A673 (cell line): ENCODE measurements at regions of chr10 and their contacts with region 1.

Region 1: GRCh38 chr10:113854011-113854760 is at the starts of genes DCLRE1A and NHLRC2:
- DNase-seq: peak; percentile 90
- H3K4me3 ChIP-seq: peak within 1 kb of the TSS; percentile 76
- H3K27ac ChIP-seq: peak within 1 kb of the TSS; percentile 99
- H3K4me1 ChIP-seq: peaks cover 27% of the 10 kb centered on the region
- H3K27me3 ChIP-seq: no peaks in the 10 kb centered on the region
- CTCF ChIP-seq: no peak
- total RNA-seq, gene DCLRE1A: 62.4 and 75.6 TPM in 2 replicates
- total RNA-seq, gene NHLRC2: 49.7 and 61.9 TPM in 2 replicates

Region 2: DNA sequence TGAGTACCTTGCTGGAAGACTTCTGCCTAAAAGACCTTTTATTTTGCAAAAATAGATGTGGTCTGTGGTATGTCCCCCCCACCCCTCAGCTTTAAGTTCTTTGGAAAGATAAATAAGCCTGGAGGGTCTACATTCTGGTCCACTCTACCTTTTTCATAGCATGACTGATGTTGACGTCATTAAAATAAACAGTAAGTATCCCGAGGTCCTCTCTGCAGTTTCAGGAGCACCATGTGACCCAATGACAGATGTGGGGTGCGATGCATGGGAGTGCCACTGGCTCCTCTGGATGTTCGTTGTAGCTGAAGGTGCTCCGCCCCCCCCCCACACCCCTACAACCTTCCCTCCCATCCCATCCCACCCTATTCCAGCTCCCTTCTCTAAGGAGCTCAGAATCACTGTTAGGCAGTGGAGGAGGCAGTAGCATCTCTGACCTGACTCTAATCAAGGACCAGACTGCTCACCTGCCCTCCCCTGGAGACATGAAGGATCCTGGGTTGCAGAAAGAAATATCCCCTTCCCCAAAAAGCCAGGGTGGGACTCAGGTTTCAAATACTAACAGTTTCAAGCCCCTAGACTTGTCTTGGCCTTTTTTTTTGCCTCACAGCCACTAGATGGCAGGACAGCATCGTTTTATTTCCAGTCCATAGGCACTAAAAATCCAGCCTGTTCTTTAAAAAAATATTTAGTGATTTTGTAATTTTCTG is 149.4 kb before region 1 on chr10:
- CTCF ChIA-PET with region 1: no interaction called
- POLR2A ChIA-PET with region 1: interaction called, 5 read pairs
- intact Hi-C with region 1: loop called (anchors 2 kb)
- DNase-seq: peak; percentile 80
- H3K4me3 ChIP-seq: no peak overlapping the region
- H3K27ac ChIP-seq: peak overlapping the region; percentile 72
- H3K4me1 ChIP-seq: peaks cover 53% of the 10 kb centered on the region
- H3K27me3 ChIP-seq: no peaks in the 10 kb centered on the region
- CTCF ChIP-seq: peak; percentile 83

Region 3: DNA sequence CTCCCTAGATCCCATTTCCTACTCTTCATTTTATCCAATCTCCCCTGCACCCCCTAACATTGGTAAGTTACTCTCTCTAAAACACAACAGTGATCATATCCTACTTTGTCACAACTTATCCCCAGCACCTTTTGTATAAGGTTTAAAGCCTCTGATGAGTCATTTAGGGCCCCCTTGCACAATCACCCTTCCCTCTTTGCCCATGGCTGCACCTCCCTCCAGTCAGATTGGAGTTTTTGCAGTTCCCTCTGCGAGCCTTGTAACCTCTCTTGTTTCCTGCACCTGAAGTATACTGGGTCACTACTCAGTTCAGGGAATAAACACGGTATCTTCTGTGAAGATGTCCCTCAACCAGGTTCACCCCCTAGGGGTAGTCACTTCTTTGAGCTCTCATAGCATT is 133.6 kb after region 1 on chr10:
- CTCF ChIA-PET with region 1: no interaction called
- POLR2A ChIA-PET with region 1: no interaction called
- intact Hi-C with region 1: loop called (anchors 1 kb)
- DNase-seq: no peak
- H3K4me3 ChIP-seq: no peak overlapping the region
- H3K27ac ChIP-seq: peak overlapping the region; percentile 96
- H3K4me1 ChIP-seq: peaks cover 43% of the 10 kb centered on the region
- H3K27me3 ChIP-seq: no peaks in the 10 kb centered on the region
- CTCF ChIP-seq: no peak